ENCODE measurements at regions of chr18 and their contacts with region 1.

Region 1: DNA sequence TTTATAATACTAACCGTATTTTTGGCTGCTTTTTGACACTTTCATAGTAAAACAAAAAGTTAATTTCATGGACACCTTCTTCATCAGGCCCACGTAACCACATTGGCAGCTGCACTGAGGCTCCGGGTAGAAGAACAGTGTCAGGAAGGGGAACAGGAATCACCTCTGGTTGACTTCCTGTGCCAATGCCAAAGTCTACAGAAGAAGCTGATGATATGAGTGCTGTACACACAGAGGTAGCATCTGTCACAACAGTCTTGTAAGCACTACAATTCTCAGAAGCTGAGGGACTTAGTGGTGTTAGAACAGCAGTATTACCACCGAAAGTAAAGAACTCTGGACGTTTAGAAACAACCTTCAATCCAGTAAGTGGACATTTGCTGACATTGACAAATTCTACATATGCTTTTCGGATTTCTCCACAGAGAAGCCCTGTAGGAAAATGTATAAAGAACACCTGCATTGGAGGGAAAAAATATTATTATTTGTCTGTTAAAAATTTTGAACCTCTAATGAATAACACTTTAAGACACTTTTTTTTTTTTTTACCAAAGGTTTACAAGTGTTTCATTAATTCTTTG is 85.3 kb downstream of the TRAPPC8 start:
- DNase-seq: no peak
- ATAC-seq: no peak
- H3K4me3 ChIP-seq: no peak overlapping the region
- H3K27ac ChIP-seq: no peak overlapping the region
- H3K4me1 ChIP-seq: peaks cover 0 to 4% (median 0%) of the 10 kb centered on the region in 9 donors
- H3K27me3 ChIP-seq: no peaks in the 10 kb centered on the region
- CTCF ChIP-seq: no peak

Region 2: GRCh38 chr18:31901063-31901462 is 43.4 kb after region 1 on chr18:
- intact Hi-C with region 1: loop called in 1 of 10 experiments (anchors 10 kb)
- DNase-seq: no peak
- ATAC-seq: no peak
- H3K4me3 ChIP-seq: no peak overlapping the region
- H3K27ac ChIP-seq: no peak overlapping the region
- H3K4me1 ChIP-seq: no peaks in the 10 kb centered on the region
- H3K27me3 ChIP-seq: no peaks in the 10 kb centered on the region
- CTCF ChIP-seq: no peak